ENCODE measurements at regions of chr15 and their contacts with region 1.

Region 1: DNA sequence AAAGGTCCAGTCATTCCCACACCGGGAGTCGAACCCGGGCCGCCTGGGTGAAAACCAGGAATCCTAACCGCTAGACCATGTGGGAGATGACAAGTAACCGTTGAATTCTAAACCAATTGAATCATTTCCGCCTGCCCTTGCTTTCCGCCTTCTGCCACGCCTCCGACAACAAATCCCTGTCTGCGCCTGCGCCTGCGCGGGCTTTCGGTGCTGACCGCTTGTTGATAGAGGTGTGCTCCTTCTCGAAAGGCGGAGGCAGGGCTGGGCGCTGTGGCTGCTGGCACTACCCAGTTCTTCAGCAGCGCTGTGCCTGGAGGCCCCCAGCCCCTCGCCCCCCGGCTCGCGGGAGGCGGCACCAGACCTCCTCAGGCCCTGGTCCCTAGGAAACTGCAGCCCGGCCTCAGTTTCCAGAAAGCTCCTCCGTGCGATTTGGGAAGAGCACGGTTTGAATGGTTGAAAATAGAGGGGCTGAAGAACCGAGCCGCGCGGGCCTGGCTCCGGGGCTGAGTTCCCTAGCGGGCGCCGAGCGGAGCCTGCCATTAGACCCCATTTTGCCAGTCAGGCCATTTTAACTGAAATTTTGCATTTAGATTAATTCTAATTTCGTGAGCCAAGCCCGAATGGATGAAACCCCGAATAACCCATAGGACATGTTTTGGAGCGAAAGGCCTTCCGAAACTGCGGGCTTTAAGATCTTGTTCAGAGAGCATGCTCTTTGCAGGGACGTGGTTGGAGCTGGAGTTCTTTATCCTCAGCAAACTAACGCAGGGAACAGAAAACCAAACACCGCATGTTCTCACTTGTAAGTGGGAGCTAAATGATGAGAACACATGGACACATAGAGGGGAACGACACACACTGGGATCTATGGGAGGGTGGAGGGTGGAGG is 219.3 kb upstream of the ATP10A start:
- DNase-seq: peak; percentile 95
- H3K4me3 ChIP-seq: peak overlapping the region; percentile 47 to 66 (median 49)
- H3K27ac ChIP-seq: peak overlapping the region; percentile 3
- H3K4me1 ChIP-seq: peaks cover 2% of the 10 kb centered on the region
- H3K27me3 ChIP-seq: no peaks in the 10 kb centered on the region
- CTCF ChIP-seq: no peak
- POLR2A ChIP-seq: no peak

Region 2: GRCh38 chr15:26628879-26629529 is 546.5 kb after region 1 on chr15:
- CTCF ChIA-PET with region 1: no interaction called
- POLR2A ChIA-PET with region 1: no interaction called
- dilution Hi-C with region 1: no loop called
- intact Hi-C with region 1: loop called (anchors 10 kb)
- DNase-seq: peak; percentile 1
- H3K4me3 ChIP-seq: peak overlapping the region in 1 of 3 experiments; percentile 41
- H3K27ac ChIP-seq: no peak overlapping the region
- H3K4me1 ChIP-seq: no peaks in the 10 kb centered on the region
- H3K27me3 ChIP-seq: no peaks in the 10 kb centered on the region
- CTCF ChIP-seq: no peak
- POLR2A ChIP-seq: no peak